Activated naive CD4-positive, alpha-beta T cell treated with anti-CD3 and anti-CD28 coated beads for 36 hours (primary cell): ENCODE measurements at regions of chr12 and their contacts with region 1.

Region 1: GRCh38 chr12:42589465-42590329 is at the start of gene PRICKLE1:
- DNase-seq: peak; percentile 17
- H3K4me3 Mint-ChIP-seq: peak within 1 kb of the TSS; percentile 65
- H3K27ac Mint-ChIP-seq: no peak within 1 kb of the TSS
- H3K4me1 Mint-ChIP-seq: peaks cover 14% of the 10 kb centered on the region
- H3K27me3 Mint-ChIP-seq: peaks cover 59% of the 10 kb centered on the region
- total RNA-seq, gene PRICKLE1: not detected

Region 2: GRCh38 chr12:42382013-42382680 is 207.6 kb before region 1 on chr12:
- CTCF ChIA-PET with region 1: no interaction called
- intact Hi-C with region 1: no loop called
- DNase-seq: no peak
- H3K4me3 Mint-ChIP-seq: no peak overlapping the region
- H3K27ac Mint-ChIP-seq: no peak overlapping the region
- H3K4me1 Mint-ChIP-seq: peaks cover 6% of the 10 kb centered on the region
- H3K27me3 Mint-ChIP-seq: no peaks in the 10 kb centered on the region

Region 3: GRCh38 chr12:42884116-42884515 is 294.4 kb after region 1 on chr12:
- CTCF ChIA-PET with region 1: no interaction called
- intact Hi-C with region 1: no loop called
- DNase-seq: no peak
- H3K4me3 Mint-ChIP-seq: no peak overlapping the region
- H3K27ac Mint-ChIP-seq: no peak overlapping the region
- H3K4me1 Mint-ChIP-seq: no peaks in the 10 kb centered on the region
- H3K27me3 Mint-ChIP-seq: no peaks in the 10 kb centered on the region

Region 4: DNA sequence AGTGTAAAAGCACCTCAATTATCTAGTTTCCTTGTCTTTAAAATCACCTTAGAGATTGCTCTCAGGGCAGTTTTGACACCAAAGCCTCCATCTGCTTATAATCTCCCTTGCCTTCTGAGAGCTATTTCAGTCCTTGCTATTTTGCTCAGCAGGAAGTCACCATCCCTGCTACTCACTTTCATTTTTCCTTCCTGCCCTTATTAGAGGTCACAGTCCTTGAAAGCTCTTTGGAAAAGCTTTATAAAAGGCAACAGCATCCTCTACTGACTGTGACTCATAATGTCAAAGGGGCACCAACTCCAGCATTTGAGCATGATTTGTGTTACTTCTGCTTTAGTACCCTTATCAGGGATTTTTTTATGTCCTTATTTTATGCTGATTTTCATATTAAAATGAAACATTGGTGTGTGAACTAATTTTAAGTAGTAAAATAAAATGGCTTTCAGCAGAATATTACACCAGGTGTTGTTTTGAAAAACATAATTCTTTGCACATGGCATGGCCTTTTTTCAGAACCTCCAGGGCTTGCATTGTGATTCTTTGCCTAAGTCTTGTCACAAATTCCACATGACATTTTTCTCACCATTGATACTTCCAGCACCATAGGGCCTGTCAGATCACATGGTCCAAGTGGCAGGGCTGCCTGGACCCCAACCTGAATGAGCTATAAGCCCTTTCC is 749.3 kb after region 1 on chr12:
- CTCF ChIA-PET with region 1: no interaction called
- intact Hi-C with region 1: loop called (anchors 5 kb)
- DNase-seq: no peak
- H3K4me3 Mint-ChIP-seq: no peak overlapping the region
- H3K27ac Mint-ChIP-seq: no peak overlapping the region
- H3K4me1 Mint-ChIP-seq: no peaks in the 10 kb centered on the region
- H3K27me3 Mint-ChIP-seq: peaks cover 2% of the 10 kb centered on the region